A673 (cell line): ENCODE measurements at regions of chr12 and their contacts with region 1.

Region 1: DNA sequence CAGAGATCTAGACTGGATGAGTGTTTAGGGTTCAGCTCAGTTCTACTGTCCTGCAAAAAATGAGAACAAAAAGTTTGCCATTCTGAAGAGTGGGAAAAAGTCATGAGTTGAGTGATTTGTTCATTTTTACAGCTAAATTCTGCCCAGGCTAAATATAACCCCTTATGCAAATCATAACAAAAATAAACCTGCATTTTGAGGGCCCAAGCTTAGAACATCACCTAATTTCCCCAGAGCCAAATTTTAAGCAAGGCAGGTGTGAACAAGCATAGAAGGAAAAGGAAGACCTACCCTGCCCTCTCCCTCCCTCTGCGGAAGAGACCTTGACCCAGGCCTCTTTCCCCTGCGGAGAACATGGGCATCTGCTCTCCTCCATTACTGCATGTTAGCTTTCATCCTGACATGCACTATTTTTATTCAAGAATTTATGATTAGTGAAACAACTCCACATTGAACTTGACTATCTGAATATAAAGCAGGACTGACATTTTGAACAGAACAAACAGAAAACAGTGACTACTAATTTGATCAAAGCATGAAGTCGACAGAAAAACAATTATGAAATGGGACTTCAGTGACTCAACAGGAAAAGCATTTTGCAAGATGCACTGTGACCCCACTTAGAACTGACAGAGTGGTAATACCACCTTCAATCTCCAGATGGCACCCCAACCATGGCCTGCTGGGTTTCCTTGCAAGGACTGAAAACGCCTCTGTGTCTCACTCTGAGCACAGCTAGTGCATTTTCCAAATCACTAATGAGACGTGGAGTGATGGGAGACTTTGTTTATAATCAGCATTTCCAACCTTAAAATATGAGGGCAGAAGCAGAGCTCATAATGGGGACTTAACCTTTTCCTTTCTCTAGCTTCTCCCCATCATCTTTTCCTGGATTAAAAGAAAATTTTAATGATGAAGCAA is 30.9 kb upstream of the SELPLG start:
- DNase-seq: peak; percentile 95
- H3K4me3 ChIP-seq: no peak overlapping the region
- H3K27ac ChIP-seq: peak overlapping the region; percentile 46
- H3K4me1 ChIP-seq: peaks cover 45% of the 10 kb centered on the region
- H3K27me3 ChIP-seq: no peaks in the 10 kb centered on the region
- CTCF ChIP-seq: peak; percentile 92

Region 2: GRCh38 chr12:108237272-108237671 is 427.3 kb before region 1 on chr12:
- CTCF ChIA-PET with region 1: no interaction called
- POLR2A ChIA-PET with region 1: no interaction called
- intact Hi-C with region 1: no loop called
- DNase-seq: peak; percentile 17
- H3K4me3 ChIP-seq: no peak overlapping the region
- H3K27ac ChIP-seq: no peak overlapping the region
- H3K4me1 ChIP-seq: no peaks in the 10 kb centered on the region
- H3K27me3 ChIP-seq: peaks cover 24% of the 10 kb centered on the region
- CTCF ChIP-seq: peak; percentile 46

Region 3: DNA sequence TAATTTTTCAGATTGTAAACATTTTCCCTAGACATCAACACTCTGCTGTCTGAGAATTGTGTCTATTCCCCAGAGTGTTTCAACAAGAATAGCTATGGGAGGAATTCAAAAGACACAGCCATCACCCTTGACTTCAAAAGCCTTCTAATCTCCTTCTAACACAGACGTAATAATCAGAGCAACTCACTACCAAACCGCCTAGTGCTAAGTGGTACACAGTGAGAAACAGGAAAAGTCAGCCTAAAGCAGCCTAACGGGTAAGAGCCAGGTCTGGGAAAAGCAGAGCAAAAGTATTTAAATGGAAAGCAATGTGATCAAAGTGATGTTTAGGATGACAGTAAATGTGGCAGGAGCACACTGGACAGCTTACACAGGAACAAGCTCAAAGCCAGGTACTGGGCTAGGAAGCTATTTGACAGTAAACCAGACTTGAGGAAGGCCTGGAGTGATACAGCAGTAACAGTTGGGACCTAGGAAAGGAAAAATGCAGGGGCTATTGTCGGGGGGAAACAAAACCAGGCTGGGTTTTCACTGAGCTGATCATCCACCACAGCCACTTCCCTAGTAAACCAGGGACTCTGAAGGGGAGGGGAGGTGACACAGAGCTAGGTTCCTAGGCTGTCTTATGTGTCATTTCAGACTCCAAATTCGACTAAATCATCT is 37.3 kb after region 1 on chr12:
- CTCF ChIA-PET with region 1: no interaction called
- POLR2A ChIA-PET with region 1: no interaction called
- intact Hi-C with region 1: no loop called
- DNase-seq: no peak
- H3K4me3 ChIP-seq: no peak overlapping the region
- H3K27ac ChIP-seq: peak overlapping the region; percentile 66
- H3K4me1 ChIP-seq: peaks cover 46% of the 10 kb centered on the region
- H3K27me3 ChIP-seq: no peaks in the 10 kb centered on the region
- CTCF ChIP-seq: no peak

Region 4: GRCh38 chr12:108731105-108731865 is 66.7 kb after region 1 on chr12 and contains the start of gene CORO1C:
- CTCF ChIA-PET with region 1: interaction called, 3 read pairs
- POLR2A ChIA-PET with region 1: no interaction called
- intact Hi-C with region 1: loop called (anchors 2 kb)
- DNase-seq: peak; percentile 98
- H3K4me3 ChIP-seq: peak within 1 kb of the TSS; percentile 90
- H3K27ac ChIP-seq: peak within 1 kb of the TSS; percentile 92
- H3K4me1 ChIP-seq: peaks cover 30% of the 10 kb centered on the region
- H3K27me3 ChIP-seq: no peaks in the 10 kb centered on the region
- CTCF ChIP-seq: peak; percentile 91
- total RNA-seq, gene CORO1C: 206 and 208 TPM in 2 replicates

Region 5: GRCh38 chr12:108803428-108804105 is 139.0 kb after region 1 on chr12:
- CTCF ChIA-PET with region 1: interaction called, 17 read pairs
- POLR2A ChIA-PET with region 1: no interaction called
- intact Hi-C with region 1: loop called (anchors 1 kb)
- DNase-seq: peak; percentile 88
- H3K4me3 ChIP-seq: no peak overlapping the region
- H3K27ac ChIP-seq: peak overlapping the region; percentile 37
- H3K4me1 ChIP-seq: peaks cover 25% of the 10 kb centered on the region
- H3K27me3 ChIP-seq: no peaks in the 10 kb centered on the region
- CTCF ChIP-seq: peak; percentile 96

Region 6: DNA sequence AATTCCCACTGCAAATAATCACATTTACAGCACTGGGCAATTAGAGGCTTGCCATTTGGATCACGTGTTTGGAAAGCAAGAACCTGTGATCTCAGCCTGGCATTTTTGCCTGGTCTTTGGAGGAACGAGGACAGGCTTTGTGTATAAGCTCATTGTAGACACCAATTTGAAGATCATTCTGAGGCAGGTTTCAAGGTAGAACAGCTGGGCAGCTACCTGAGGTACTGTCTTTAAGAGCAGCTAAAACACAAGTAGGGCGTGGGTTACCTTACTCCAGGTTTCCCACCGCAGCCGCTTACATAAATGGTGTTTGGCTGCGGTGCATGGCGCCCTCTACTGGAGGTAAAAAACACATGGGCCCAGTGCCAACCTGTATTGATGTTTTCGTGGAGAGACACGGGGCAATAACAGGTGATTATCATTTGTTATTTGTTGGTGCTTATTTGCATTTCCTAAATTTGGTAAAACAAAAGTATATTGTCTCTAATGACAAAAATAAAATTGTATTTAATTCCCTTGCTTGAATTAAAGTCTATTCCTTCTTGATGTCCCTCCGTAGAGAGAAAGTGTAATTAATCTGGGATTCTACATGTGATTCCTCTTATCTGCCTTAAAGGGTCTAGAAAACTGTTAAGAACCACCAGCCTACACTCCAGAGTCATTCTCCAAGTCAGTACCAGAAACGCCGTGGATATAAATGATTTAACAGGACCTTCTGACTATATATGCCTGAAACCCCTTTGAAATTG is 286.6 kb after region 1 on chr12:
- CTCF ChIA-PET with region 1: interaction called, 3 read pairs
- POLR2A ChIA-PET with region 1: no interaction called
- intact Hi-C with region 1: loop called (anchors 5 kb)
- DNase-seq: peak; percentile 73
- H3K4me3 ChIP-seq: peak overlapping the region; percentile 12
- H3K27ac ChIP-seq: no peak overlapping the region
- H3K4me1 ChIP-seq: peaks cover 7% of the 10 kb centered on the region
- H3K27me3 ChIP-seq: no peaks in the 10 kb centered on the region
- CTCF ChIP-seq: peak; percentile 91